Prostate gland (tissue), 2 donors: ENCODE measurements at regions of chr16 and their contacts with region 1.

Region 1: DNA sequence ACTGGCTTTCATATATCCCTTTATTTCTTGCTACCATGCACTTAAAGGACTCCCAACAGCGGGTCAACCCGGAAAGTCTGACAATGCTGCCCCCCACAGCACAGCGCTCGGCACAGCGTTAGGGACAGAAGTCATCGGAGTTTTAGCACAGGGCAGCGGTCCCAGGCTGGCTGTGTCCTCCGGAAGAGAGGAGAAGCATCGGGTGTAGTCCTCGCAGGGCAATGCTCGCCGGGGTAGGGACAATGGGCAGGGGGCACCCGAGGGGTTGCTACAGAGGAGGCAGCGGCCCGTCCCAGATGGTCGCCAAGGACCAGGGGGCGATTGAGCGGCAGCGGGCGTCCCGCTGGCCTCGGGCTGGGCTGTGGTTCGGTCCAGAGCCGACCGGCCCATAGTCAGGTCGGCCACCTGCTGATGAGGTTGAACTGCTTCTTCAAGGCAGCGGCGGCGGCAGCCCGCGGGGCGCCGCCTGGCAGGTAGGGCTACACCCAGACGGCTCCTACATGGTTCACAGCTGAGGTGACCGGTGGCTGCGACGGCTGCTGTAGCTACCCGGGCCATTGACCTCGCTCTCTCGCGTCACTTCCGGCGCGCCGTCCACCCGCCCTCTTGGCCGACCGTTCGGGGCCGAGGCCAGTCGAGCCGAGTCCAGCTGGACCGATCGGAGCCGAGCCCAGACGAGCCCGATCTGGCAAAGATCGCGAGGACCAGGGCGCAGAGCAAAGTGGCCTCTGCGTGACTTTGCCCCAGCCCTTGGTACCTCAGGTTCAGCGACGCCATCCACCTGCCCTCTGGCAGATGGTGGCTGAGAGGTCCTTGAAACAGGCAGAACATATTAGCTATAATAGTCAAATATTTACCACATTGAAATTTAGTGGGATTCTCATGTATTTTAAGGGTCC is 4.7 kb upstream of the LCMT1 start:
- DNase-seq: peak; percentile 93
- H3K4me3 ChIP-seq: peak overlapping the region; percentile 59 to 73
- H3K27ac ChIP-seq: peak overlapping the region; percentile 73 to 76
- H3K4me1 ChIP-seq: no peaks in the 10 kb centered on the region
- H3K27me3 ChIP-seq: no peaks in the 10 kb centered on the region
- CTCF ChIP-seq: peak in 1 of 4 experiments; percentile 4
- POLR2A ChIP-seq: peak; percentile 20

Region 2: GRCh38 chr16:24853830-24854229 is 253.0 kb before region 1 on chr16:
- intact Hi-C with region 1: no loop called
- DNase-seq: peak; percentile 16
- H3K4me3 ChIP-seq: no peak overlapping the region
- H3K27ac ChIP-seq: no peak overlapping the region
- H3K4me1 ChIP-seq: peaks cover 2% of the 10 kb centered on the region
- H3K27me3 ChIP-seq: no peaks in the 10 kb centered on the region
- CTCF ChIP-seq: no peak
- POLR2A ChIP-seq: no peak

Region 3: DNA sequence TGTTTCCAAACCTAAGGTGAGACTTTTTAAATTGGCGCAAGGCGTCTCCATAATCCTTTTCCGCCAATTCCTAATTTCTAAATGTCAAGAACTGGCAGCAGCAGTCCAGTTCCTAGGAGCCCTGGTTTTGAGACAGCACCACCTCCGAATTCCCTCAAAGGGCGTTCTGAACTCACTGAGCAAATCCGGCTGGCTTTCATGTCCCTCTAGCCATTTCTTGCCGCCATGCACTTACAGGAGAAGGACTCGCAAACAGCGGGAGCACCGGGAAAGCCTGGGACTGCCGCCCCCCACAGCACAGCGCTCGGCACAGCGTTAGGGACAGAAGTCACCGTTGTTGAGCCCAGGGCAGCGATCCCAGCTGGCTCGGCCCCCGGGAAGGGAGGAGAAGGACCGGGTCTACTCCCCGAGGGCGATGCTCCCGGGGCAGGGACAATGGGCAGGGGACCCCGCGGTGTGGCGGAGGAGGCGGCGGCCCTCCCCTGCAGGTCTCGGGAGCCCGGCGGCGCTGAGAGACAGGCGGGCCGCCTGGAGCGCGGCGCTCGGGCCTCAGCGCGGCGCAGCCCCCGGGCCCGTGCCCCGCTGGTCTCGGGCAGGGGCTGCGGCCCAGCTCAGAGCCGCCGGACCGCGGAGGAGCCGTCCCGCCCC is 92.2 kb before region 1 on chr16:
- intact Hi-C with region 1: loop called (anchors 10 kb)
- DNase-seq: peak; percentile 33
- H3K4me3 ChIP-seq: peak overlapping the region; percentile 88 to 91
- H3K27ac ChIP-seq: peak overlapping the region; percentile 86 to 94
- H3K4me1 ChIP-seq: peaks cover 9% of the 10 kb centered on the region
- H3K27me3 ChIP-seq: no peaks in the 10 kb centered on the region
- CTCF ChIP-seq: no peak
- POLR2A ChIP-seq: no peak

Region 4: DNA sequence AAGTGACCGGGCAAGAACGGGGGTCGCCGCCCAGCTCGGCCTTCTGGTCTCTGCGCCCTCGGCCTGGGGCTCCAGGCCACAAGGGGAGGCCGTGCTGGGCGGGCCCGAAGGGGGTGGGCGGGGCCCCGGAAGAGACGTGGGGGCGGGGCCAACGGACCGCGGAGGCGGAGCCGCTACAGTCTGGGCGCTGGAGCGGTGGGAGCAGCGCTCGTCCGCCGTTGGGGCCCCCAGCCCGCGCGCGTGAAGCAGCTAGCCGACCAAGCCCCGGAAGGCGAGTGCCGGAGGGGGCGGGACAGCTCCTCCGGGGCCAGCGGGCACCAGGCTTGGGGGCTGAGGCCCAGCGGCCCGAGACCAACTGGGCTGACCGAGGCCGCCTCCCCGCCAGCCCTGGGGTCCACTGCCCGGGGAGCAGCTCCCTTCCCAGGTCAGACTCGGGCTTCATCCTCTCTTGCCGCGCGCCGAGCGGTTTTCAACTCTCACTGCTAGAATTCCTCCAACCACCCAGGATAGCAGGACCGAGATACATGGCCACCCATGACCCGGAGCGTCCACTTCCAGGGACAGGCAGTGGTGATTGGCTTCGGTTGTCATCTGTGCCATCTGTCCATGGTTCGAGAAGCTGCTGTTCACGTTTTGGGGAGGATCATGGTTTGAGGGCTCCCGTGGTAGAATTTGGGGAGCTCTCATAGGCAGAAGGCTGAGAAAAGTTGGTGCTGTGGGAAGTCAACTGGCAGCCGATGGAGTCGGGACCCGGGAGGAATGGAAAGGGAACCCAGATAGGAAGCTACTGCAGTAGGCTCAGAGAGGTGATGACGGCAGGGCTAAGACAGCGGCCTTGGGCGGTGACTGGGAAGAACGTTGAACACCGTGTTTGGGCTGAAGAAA is 39.8 kb before region 1 on chr16:
- intact Hi-C with region 1: loop called (anchors 2 kb)
- DNase-seq: peak; percentile 80
- H3K4me3 ChIP-seq: peak overlapping the region; percentile 72 to 87
- H3K27ac ChIP-seq: peak overlapping the region; percentile 82 to 90
- H3K4me1 ChIP-seq: no peaks in the 10 kb centered on the region
- H3K27me3 ChIP-seq: no peaks in the 10 kb centered on the region
- CTCF ChIP-seq: no peak
- POLR2A ChIP-seq: peak; percentile 80